ENCODE measurements at regions of chr14 and their contacts with region 1.

Region 1: GRCh38 chr14:23320774-23321571 is at the start of gene PABPN1:
- DNase-seq: peak; percentile 96 to 100 (median 99)
- H3K4me3 ChIP-seq: peak within 1 kb of the TSS; percentile 73 to 98
- H3K4me3 Mint-ChIP-seq: peak within 1 kb of the TSS; percentile 91 to 94 (median 92)
- H3K27ac ChIP-seq: peak within 1 kb of the TSS; percentile 89
- H3K27ac Mint-ChIP-seq: peak within 1 kb of the TSS; percentile 90 to 99 (median 98)
- H3K4me1 ChIP-seq: peaks cover 29% of the 10 kb centered on the region
- H3K4me1 Mint-ChIP-seq: peaks cover 18 to 37% (median 27%) of the 10 kb centered on the region in 4 donors
- H3K27me3 ChIP-seq: no peaks in the 10 kb centered on the region
- H3K27me3 Mint-ChIP-seq: peaks cover 0 to 2% of the 10 kb centered on the region in 2 donors
- total RNA-seq, gene PABPN1: 194 to 196 TPM

Region 2: GRCh38 chr14:22918804-22919600 is 402.0 kb before region 1 on chr14 and contains the start of gene RBM23:
- CTCF ChIA-PET with region 1: no interaction called
- POLR2A ChIA-PET with region 1: interaction called, 3 read pairs
- intact Hi-C with region 1: loop called (anchors 1 kb)
- DNase-seq: peak; percentile 99 to 100 (median 100)
- H3K4me3 ChIP-seq: peak within 1 kb of the TSS; percentile 67 to 93
- H3K4me3 Mint-ChIP-seq: peak within 1 kb of the TSS; percentile 94 to 99 (median 96)
- H3K27ac ChIP-seq: peak within 1 kb of the TSS; percentile 98
- H3K27ac Mint-ChIP-seq: peak within 1 kb of the TSS; percentile 99 to 100 (median 100)
- H3K4me1 ChIP-seq: peaks cover 40% of the 10 kb centered on the region
- H3K4me1 Mint-ChIP-seq: peaks cover 13 to 56% (median 33%) of the 10 kb centered on the region in 4 donors
- H3K27me3 ChIP-seq: no peaks in the 10 kb centered on the region
- H3K27me3 Mint-ChIP-seq: peaks cover 0 to 4% of the 10 kb centered on the region in 2 donors
- total RNA-seq, gene RBM23: 119 to 123 TPM

Region 3: DNA sequence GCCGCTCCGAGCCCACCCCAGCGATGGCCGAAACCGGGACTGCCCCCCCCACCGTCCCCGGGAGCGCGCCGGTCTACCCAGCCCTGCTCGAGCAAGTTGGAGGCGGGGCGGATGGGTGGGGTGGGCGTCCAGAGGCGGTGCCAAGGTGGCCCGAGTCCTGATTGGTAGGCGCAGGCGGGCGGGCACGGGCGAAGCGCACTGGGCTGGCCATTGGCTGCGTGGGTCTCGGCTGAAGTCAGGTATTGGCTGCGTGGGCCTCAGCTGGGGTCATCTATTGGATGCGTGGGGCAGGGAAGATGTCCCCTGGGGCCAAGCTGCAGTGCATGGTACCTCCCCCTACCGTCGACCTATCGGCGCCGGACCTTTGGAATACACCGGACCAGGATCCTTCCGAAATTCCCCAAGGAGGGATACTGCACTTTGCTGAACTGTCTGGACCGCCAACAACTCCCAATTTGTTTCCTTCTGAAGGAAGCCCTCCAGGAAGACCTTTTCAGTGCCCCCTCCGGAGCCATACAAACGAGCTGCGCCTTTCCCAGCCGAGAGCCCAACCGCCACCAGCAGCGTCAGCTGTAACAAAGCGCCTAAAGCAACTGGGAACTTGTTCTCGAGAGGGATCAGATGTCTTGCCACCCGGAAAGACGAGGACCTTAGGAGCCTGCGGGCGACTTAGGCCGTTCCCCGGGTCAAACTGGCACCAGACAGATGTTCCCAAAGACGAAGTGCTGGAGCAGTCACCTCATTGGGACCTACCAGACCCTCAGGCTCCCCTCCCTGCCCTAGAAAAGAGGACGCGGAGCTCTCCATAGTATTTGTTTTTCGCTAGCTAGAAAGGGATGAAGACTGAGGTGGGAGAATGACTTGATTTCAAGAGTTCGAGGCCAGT is 34.7 kb before region 1 on chr14 and contains the start of gene HOMEZ:
- CTCF ChIA-PET with region 1: interaction called, 7 read pairs
- POLR2A ChIA-PET with region 1: interaction called, 58 read pairs
- intact Hi-C with region 1: loop called (anchors 1 kb)
- DNase-seq: peak; percentile 94 to 98 (median 95)
- H3K4me3 ChIP-seq: peak within 1 kb of the TSS; percentile 71 to 85
- H3K4me3 Mint-ChIP-seq: peak within 1 kb of the TSS; percentile 95 to 99 (median 98)
- H3K27ac ChIP-seq: peak within 1 kb of the TSS; percentile 75
- H3K27ac Mint-ChIP-seq: peak within 1 kb of the TSS; percentile 90 to 98 (median 96)
- H3K4me1 ChIP-seq: peaks cover 23% of the 10 kb centered on the region
- H3K4me1 Mint-ChIP-seq: peaks cover 13 to 36% (median 24%) of the 10 kb centered on the region in 4 donors
- H3K27me3 ChIP-seq: no peaks in the 10 kb centered on the region
- H3K27me3 Mint-ChIP-seq: no peaks in the 10 kb centered on the region
- total RNA-seq, gene HOMEZ: 21.0 to 21.7 TPM

Region 4: GRCh38 chr14:23310546-23310945 is 10.4 kb before region 1 on chr14:
- CTCF ChIA-PET with region 1: interaction called, 93 read pairs
- POLR2A ChIA-PET with region 1: interaction called, 373 read pairs
- intact Hi-C with region 1: no loop called
- DNase-seq: no peak
- H3K4me3 ChIP-seq: no peak overlapping the region
- H3K4me3 Mint-ChIP-seq: no peak overlapping the region
- H3K27ac ChIP-seq: no peak overlapping the region
- H3K27ac Mint-ChIP-seq: no peak overlapping the region
- H3K4me1 ChIP-seq: no peaks in the 10 kb centered on the region
- H3K4me1 Mint-ChIP-seq: no peaks in the 10 kb centered on the region
- H3K27me3 ChIP-seq: no peaks in the 10 kb centered on the region
- H3K27me3 Mint-ChIP-seq: peaks cover 14 to 29% of the 10 kb centered on the region in 2 donors

Region 5: DNA sequence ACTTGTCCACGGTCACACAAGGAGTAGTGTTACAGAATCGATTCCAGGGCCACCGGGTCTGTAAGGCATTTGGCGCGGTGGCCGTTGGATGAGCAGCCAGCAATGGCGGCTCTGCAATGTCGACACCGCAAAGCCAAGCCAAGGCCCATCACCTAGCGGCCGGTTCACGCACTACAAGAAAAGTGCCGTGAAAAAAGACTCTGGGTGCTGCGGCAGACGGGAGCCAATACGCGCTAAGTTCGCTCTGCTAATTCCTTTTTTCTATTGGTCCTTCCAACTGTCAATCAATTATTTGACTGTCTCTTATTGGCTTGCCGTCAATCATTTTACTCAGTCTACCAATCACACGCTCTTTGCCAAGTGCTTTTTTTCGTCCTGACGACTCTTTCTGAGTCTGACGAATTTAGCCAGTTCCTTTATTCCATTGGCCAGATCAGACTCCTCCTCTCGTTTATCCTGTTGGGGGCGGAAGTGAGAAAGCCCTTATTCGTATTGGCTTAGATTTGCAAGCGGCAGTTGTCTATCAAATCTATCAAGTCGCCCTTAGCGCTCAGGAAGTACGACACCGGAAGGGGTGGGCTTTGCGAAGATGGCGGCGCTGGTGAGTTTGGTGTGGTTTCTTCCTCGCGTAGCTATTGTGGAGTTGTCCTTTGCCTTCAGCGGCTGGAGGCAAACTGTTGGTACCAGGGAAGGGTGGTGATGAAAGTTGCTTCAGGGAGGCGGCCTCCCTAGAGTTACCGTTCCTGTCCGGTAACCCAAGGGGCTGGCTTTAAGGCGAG is 148.3 kb after region 1 on chr14 and contains the start of gene NGDN:
- CTCF ChIA-PET with region 1: interaction called, 3 read pairs
- POLR2A ChIA-PET with region 1: interaction called, 6 read pairs
- intact Hi-C with region 1: loop called (anchors 1 kb)
- DNase-seq: peak; percentile 93 to 99 (median 97)
- H3K4me3 ChIP-seq: peak within 1 kb of the TSS; percentile 75 to 78
- H3K4me3 Mint-ChIP-seq: peak within 1 kb of the TSS in 1 of 8 donors; percentile 35
- H3K27ac ChIP-seq: peak within 1 kb of the TSS; percentile 89
- H3K27ac Mint-ChIP-seq: peak within 1 kb of the TSS in 3 of 7 donors; percentile 36 to 78 (median 43)
- H3K4me1 ChIP-seq: peaks cover 17% of the 10 kb centered on the region
- H3K4me1 Mint-ChIP-seq: peaks cover 0 to 7% (median 6%) of the 10 kb centered on the region in 4 donors
- H3K27me3 ChIP-seq: no peaks in the 10 kb centered on the region
- H3K27me3 Mint-ChIP-seq: no peaks in the 10 kb centered on the region
- total RNA-seq, gene NGDN: 60.7 to 63.5 TPM

Region 6: GRCh38 chr14:23621204-23621931 is 300.4 kb after region 1 on chr14:
- CTCF ChIA-PET with region 1: no interaction called
- POLR2A ChIA-PET with region 1: no interaction called
- intact Hi-C with region 1: no loop called
- DNase-seq: no peak
- H3K4me3 ChIP-seq: no peak overlapping the region
- H3K4me3 Mint-ChIP-seq: peak overlapping the region in 1 of 8 donors; percentile 37
- H3K27ac ChIP-seq: no peak overlapping the region
- H3K27ac Mint-ChIP-seq: no peak overlapping the region
- H3K4me1 ChIP-seq: no peaks in the 10 kb centered on the region
- H3K4me1 Mint-ChIP-seq: no peaks in the 10 kb centered on the region
- H3K27me3 ChIP-seq: no peaks in the 10 kb centered on the region
- H3K27me3 Mint-ChIP-seq: peaks cover 6 to 12% of the 10 kb centered on the region in 2 donors

Measured in CD4-positive, alpha-beta memory T cell (primary cell).